ENCODE measurements at regions of chr5 and their contacts with region 1.

Region 1: DNA sequence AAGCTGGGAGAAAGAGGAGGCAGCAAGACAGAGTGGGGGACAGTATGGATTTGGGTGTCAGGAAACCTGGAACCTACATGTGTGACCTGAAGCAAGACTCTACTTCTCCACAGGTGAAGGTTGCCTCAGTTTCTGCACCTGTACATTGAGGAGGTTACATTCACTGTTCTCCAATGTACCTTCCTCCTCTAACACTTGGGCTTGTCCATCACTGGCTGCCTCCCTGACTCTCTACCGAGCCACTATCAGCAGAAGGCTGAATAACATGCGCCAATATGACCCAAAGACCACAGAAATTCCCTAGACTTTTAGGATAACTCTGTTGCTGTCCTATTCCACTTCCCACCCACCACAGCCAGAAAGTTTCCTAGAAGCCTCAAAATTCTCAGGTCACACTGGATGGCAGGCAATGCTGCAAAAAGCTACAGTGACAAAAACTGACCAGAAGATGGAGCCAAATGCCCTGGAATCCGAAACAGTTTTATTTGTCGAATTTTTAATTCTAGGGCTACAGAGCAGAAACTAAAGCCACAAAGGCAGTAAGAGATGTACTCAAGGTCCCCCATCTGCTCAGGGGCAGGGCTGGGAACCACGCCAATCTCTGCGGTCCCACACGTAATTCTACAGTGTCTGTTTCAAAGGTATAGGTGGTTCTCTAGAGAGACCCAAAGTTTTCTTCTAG is 64.4 kb downstream of the FAM114A2 start:
- DNase-seq: no peak
- ATAC-seq: no peak
- H3K4me3 ChIP-seq: no peak overlapping the region
- H3K27ac ChIP-seq: no peak overlapping the region
- H3K4me1 ChIP-seq: no peaks in the 10 kb centered on the region
- H3K27me3 ChIP-seq: no peaks in the 10 kb centered on the region

Region 2: GRCh38 chr5:154405078-154405792 is 431.0 kb after region 1 on chr5:
- intact Hi-C with region 1: loop called in 1 of 2 experiments (anchors 10 kb)
- DNase-seq: peak; percentile 88 to 94
- ATAC-seq: peak; percentile 95
- H3K4me3 ChIP-seq: peak overlapping the region in 1 of 2 donors; percentile 8
- H3K27ac ChIP-seq: no peak overlapping the region
- H3K4me1 ChIP-seq: no peaks in the 10 kb centered on the region
- H3K27me3 ChIP-seq: no peaks in the 10 kb centered on the region